ENCODE measurements at regions of chr4 and their contacts with region 1.

Region 1: GRCh38 chr4:77433418-77433733 is 172.2 kb upstream of the CXCL13 start:
- DNase-seq: no peak
- H3K4me3 ChIP-seq: no peak overlapping the region
- H3K27ac ChIP-seq: no peak overlapping the region
- H3K4me1 ChIP-seq: peaks cover 0 to 3% (median 0%) of the 10 kb centered on the region in 4 experiments; a peak in 1 of 7 replicates
- H3K27me3 ChIP-seq: no peaks in the 10 kb centered on the region; a peak in 1 of 7 replicates
- CTCF ChIP-seq: peak in 2 of 3 experiments; percentile 64 to 87; a peak in 3 of 4 replicates
- EP300 ChIP-seq: no peak
- POLR2A ChIP-seq: no peak
- RAD21 ChIP-seq: peak; percentile 79 to 89

Region 2: DNA sequence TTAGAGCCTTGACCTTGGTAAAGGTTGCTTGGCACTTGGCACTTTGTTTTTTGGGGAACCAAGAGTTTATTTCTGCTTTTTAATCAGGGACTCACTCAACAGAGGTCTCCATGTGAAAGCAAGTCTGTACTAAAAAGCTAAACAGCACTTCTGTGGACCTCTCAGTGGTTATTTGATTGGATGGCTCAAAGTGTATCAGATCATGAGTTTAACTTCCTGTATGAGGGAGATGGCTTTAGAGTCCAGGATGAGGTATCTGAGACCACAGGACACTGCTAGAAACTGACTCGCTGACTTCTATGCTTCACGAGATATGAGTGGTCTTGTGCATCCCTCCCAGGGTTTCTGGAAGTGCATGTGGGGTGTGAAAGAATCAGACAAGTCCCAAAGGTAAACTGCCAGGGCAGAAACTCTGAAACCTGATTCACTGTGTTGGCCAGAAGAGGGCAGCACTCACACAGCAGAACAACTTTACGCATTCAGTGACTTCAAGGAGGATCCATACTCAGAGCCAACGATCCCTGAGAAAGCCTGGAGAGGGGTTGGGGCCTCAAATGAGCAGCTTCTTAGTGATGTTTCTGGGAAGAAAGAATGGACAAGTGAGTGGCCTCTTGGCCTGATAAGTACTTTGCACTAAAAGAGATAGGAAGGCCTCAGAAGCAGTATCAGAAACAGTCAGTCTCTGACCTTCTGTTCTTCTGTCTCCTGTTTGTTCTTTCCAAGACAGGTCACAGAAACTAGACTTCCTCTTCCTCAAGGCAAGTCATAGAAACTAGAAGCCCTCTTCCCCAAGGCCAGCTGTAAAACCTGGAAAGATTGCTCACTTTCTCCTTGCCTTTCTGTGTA is 48.0 kb before region 1 on chr4:
- CTCF ChIA-PET with region 1: interaction called, 1,551 read pairs
- POLR2A ChIA-PET with region 1: interaction called, 3 read pairs
- DNase-seq: peak; percentile 33 to 73
- H3K4me3 ChIP-seq: no peak overlapping the region
- H3K27ac ChIP-seq: no peak overlapping the region
- H3K4me1 ChIP-seq: peaks cover 0 to 4% (median 3%) of the 10 kb centered on the region in 4 experiments; a peak in 2 of 7 replicates
- H3K27me3 ChIP-seq: peaks cover 0 to 1% (median 0%) of the 10 kb centered on the region in 4 experiments; a peak in 1 of 7 replicates
- CTCF ChIP-seq: peak; percentile 61 to 93 (median 92)
- EP300 ChIP-seq: no peak
- POLR2A ChIP-seq: no peak
- RAD21 ChIP-seq: peak; percentile 89 to 91

Region 3: DNA sequence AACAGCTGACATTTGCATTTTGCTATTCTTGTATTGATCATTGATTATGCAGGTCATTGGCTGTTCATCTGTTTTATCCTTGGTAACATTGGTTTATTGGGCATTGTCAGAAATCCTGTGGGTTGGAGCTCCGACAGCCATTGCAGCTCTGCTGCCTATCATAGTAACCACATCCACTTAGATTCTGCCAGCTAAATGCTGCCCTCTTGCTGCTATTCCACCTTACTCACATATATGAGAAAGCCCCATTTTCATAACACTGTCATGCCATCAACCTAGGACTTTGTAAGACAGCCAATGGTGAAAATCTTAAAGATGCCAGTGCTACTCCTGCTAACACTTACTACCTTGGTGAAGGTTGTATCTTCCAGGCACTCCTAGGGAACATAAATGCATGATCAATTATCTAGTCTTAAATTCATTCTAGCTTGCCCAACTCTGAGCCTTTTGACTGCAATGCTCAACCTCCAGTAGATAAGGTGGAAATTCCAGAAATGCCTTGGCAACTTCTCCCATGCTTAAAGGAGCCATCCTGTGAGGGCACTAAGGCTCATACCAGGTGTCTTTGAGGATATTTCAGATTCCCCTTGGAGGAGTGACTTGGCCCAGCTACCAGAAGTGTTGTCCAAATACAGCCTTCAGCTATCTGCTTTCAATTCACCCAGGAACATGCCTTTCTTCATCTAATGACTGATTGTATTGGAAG is 14.9 kb before region 1 on chr4:
- CTCF ChIA-PET with region 1: interaction called, 121 read pairs
- POLR2A ChIA-PET with region 1: interaction called, 3 read pairs
- DNase-seq: no peak
- H3K4me3 ChIP-seq: no peak overlapping the region
- H3K27ac ChIP-seq: no peak overlapping the region
- H3K4me1 ChIP-seq: no peaks in the 10 kb centered on the region
- H3K27me3 ChIP-seq: no peaks in the 10 kb centered on the region
- CTCF ChIP-seq: peak in 2 of 3 experiments; percentile 49 to 58; a peak in 3 of 4 replicates
- EP300 ChIP-seq: no peak
- POLR2A ChIP-seq: no peak
- RAD21 ChIP-seq: peak; percentile 62 to 74

Region 4: DNA sequence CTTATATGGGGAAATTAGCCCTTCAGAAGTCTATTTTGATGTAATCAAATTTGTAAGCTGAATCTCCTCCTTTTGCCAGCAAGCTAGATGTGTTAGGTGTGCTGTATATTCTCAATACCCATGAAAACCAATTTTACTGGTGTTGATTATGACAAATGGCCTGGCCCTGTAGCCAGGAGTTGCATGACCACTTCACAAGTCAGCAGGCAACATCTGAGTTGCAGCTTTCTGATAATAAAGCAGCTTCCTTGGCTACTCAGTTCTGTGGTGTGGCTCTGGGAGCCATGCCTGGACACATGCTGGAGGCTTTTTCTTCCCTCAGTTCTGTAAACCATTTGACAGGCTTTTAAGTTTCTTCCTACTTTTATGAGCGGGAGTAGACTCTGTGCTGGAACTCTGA is 18.2 kb after region 1 on chr4:
- CTCF ChIA-PET with region 1: interaction called, 120 read pairs
- POLR2A ChIA-PET with region 1: no interaction called
- DNase-seq: no peak
- H3K4me3 ChIP-seq: no peak overlapping the region
- H3K27ac ChIP-seq: no peak overlapping the region
- H3K4me1 ChIP-seq: no peaks in the 10 kb centered on the region
- H3K27me3 ChIP-seq: no peaks in the 10 kb centered on the region
- CTCF ChIP-seq: no peak
- EP300 ChIP-seq: no peak
- POLR2A ChIP-seq: no peak
- RAD21 ChIP-seq: no peak

Region 5: GRCh38 chr4:77473509-77473908 is 40.1 kb after region 1 on chr4:
- CTCF ChIA-PET with region 1: interaction called, 70 read pairs
- POLR2A ChIA-PET with region 1: no interaction called
- DNase-seq: no peak
- H3K4me3 ChIP-seq: no peak overlapping the region
- H3K27ac ChIP-seq: no peak overlapping the region
- H3K4me1 ChIP-seq: no peaks in the 10 kb centered on the region; a peak in 1 of 7 replicates
- H3K27me3 ChIP-seq: no peaks in the 10 kb centered on the region
- CTCF ChIP-seq: peak in 2 of 3 experiments; percentile 63 to 66; a peak in 3 of 4 replicates
- EP300 ChIP-seq: no peak
- POLR2A ChIP-seq: no peak
- RAD21 ChIP-seq: peak; percentile 59 to 71